ENCODE measurements at regions of chr2 and their contacts with region 1.

Region 1: GRCh38 chr2:38315707-38316333 is 61.3 kb downstream of the ATL2 start:
- DNase-seq: no peak
- ATAC-seq: peak; percentile 50

Region 2: DNA sequence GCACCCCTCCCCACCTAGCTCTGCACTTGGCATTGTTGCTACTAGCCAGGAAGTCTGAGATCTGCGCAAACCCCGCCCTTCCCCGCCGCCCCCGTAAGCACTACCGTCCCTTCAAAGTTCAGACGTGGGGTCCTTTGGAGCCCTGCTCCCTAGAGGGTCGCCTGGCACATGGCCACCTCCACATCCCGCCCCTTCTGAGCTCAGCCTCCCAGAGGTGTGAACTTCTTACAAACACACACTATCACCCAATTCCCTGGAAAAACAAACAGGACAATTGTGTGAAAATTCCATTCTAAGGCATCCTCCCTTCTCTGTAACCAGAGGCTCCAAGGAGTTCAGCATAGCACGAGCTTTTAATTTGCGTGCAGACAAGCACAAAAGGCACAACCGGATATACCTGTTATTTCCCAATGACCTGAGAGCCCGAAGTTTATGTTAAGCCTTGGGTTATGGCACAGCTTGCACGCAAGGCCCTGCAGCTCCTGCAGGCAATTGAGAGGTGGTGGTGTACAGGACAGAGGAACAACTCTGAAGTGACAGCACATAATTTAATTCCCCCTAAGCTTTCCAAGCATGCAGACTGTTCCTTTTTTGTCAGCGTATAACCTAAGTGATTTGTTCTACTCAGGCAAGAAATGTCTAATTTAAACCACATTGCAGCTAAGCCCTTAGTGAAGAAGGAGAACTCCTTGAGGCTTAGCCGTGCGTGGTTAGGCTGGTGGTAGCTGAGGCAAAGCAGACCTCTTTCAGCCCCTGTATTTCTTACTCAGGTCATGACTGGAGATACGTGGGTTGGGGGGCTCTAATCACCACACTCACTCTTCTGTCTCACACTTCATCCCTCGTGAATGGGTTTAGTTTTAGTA is 219.6 kb before region 1 on chr2:
- intact Hi-C with region 1: no loop called
- DNase-seq: peak; percentile 74
- ATAC-seq: peak; percentile 8

Region 3: DNA sequence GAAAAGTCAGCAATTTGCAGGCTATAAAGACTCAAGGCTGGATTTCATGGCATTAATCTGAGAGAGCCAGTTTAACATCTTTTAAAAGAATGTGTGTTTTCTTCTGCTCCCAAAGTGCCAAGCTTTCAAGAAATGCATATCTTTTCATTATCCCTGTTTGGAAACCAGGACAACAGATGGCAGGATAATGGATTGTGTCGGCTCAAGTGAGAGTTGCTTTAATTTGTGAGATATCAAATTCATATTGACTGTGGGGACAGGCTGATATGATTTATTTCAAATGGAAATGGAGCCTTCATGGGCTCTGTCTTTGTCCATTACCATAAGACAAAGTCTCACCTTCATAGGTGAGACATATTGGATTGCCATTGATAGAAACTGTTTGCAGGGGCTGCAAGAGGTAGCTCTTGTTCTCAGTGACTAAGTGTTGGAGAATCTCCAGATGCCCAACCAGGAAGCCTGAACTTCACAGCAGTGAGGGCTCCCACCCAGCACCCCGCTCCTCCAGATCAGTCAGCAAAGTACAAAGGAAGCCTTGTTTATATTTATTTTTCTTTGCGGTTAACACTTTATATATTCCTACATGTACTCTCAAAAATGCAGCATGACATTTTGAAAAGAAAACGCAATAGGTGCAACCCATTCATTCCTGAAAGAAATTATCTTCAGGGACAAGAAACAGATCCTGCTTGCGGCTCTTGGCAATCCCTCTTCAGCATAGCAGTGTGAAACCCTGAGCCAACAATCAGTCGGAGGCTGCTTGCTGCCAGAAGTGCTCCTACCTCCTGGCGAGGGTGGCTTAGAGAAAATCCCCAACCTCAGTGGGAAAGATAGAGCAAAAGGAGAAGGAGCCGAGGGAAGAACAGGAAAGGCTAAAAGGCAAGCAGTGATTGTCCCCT is 127.1 kb after region 1 on chr2:
- intact Hi-C with region 1: loop called (anchors 5 kb)
- DNase-seq: no peak
- ATAC-seq: peak; percentile 66

Region 4: GRCh38 chr2:38465789-38466127 is 149.9 kb after region 1 on chr2:
- intact Hi-C with region 1: loop called (anchors 5 kb)
- DNase-seq: no peak
- ATAC-seq: peak; percentile 48

Region 5: GRCh38 chr2:38740851-38741731 is 425.3 kb after region 1 on chr2:
- intact Hi-C with region 1: loop called (anchors 10 kb)
- DNase-seq: no peak
- ATAC-seq: no peak

Measured in Right ventricle myocardium inferior (tissue), 1 donor.